Activated CD4-positive, alpha-beta memory T cell treated with anti-CD3 and anti-CD28 coated beads, Interleukin-2, amount 10 ng/mL, durations not matched to agents 7 days and 5 days (primary cell): ENCODE measurements at regions of chr11 and their contacts with region 1.

Region 1: GRCh38 chr11:36452236-36452940 is 57.7 kb downstream of the TRAF6 start:
- DNase-seq: peak; percentile 63
- H3K4me3 Mint-ChIP-seq: no peak overlapping the region
- H3K27ac Mint-ChIP-seq: peak overlapping the region; percentile 68
- H3K4me1 Mint-ChIP-seq: peaks cover 52% of the 10 kb centered on the region
- H3K27me3 Mint-ChIP-seq: peaks cover 2% of the 10 kb centered on the region

Region 2: DNA sequence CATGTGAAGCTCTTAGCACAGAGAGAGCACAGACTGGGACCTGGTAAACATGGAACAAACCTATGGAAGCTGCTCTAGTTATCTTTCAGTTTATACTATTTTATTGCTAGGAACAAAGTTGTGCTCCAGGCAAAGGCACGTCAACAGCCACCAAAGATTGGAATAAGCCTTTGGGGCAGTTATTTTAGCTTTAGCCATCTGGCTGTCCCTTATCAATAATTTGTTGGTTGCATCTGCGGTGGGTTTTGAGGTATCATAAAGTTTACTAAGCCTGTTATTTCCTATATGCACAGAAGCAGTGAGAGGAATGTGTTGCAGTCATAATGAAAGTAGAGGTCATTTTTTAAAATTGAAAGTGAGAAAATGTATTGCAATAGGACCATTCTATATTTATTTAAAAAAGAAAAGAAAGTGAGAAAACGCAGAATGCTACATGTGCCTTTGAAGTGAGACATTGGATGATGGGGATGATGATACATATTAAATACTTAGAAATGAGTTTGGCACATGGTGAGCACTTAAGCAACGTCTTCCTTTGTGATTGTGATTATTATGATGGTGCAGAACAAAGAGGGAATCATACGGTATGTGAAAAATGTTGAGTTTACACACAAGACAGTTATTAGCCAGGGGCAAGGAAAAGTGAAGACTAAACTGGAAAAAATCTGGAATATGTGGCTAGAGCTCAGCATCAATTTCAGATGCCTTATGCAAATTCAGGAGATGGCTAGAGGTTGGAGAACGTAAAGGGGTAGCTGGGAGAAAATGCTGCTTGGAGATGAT is 98.0 kb before region 1 on chr11:
- CTCF ChIA-PET with region 1: interaction called, 10 read pairs
- POLR2A ChIA-PET with region 1: interaction called, 10 read pairs
- DNase-seq: no peak
- H3K4me3 Mint-ChIP-seq: peak overlapping the region; percentile 1
- H3K27ac Mint-ChIP-seq: no peak overlapping the region
- H3K4me1 Mint-ChIP-seq: peaks cover 60% of the 10 kb centered on the region
- H3K27me3 Mint-ChIP-seq: peaks cover 37% of the 10 kb centered on the region

Region 3: DNA sequence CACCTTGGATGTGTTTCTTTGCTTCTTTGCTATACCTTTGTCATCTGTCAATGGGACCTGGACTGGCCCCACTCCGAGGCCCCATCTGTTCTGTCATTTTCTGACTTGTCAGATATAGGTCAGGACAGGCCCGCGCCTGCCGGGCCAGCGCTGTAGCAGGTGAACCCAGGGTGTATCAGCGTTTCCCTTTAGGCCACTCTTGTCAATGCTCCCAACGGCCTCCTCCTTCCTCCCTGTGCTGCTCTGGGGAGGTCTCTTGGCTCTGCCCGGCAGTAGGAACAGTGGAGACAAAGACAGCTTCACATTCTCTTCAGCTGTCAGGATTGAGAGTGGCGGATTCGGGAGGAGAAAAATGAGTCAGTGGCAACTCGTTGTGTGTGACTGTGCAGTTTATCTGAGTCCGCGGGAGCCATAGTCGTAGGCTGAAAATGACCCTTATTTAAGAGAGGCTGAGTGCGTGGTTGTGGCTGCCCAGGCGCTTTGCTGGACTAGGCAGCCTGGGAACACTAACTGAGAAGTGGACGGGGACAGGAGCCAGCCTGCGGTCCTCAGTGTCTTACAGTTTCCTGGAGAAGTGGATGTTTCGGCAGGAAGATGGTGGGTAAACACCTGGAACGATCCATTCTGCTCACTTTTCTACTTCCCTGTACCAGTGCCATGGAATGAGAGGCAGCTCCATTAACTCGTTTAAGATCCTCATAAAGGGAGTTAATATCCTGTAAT is 54.0 kb before region 1 on chr11:
- CTCF ChIA-PET with region 1: no interaction called
- POLR2A ChIA-PET with region 1: no interaction called
- DNase-seq: no peak
- H3K4me3 Mint-ChIP-seq: no peak overlapping the region
- H3K27ac Mint-ChIP-seq: no peak overlapping the region
- H3K4me1 Mint-ChIP-seq: peaks cover 46% of the 10 kb centered on the region
- H3K27me3 Mint-ChIP-seq: no peaks in the 10 kb centered on the region

Region 4: GRCh38 chr11:36411202-36411640 is 41.2 kb before region 1 on chr11:
- CTCF ChIA-PET with region 1: interaction called, 5 read pairs
- POLR2A ChIA-PET with region 1: interaction called, 15 read pairs
- DNase-seq: peak; percentile 38
- H3K4me3 Mint-ChIP-seq: peak overlapping the region; percentile 32
- H3K27ac Mint-ChIP-seq: peak overlapping the region; percentile 87
- H3K4me1 Mint-ChIP-seq: peaks cover 69% of the 10 kb centered on the region
- H3K27me3 Mint-ChIP-seq: no peaks in the 10 kb centered on the region

Region 5: DNA sequence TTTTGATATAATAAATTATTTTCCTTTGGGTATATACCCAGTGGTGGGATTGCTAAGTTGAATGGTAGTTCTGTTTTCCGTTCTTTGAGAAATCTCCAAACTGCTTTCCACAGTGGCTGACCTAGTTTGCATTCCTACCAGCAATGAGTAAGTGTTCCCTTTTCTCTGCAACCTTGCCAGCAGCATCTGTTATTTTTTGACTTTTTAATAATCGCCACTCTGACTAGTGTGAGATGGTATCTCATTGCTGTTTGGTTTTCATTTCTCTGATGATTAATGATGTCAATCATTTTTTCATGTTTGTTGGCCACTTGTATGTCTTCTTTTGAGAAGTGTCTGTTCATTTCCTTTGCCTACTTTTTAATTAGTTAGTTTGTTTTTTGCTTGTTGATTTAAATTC is 379.1 kb after region 1 on chr11:
- CTCF ChIA-PET with region 1: no interaction called
- POLR2A ChIA-PET with region 1: no interaction called
- DNase-seq: no peak
- H3K4me3 Mint-ChIP-seq: no peak overlapping the region
- H3K27ac Mint-ChIP-seq: no peak overlapping the region
- H3K4me1 Mint-ChIP-seq: no peaks in the 10 kb centered on the region
- H3K27me3 Mint-ChIP-seq: no peaks in the 10 kb centered on the region